ENCODE measurements at regions of chr6 and their contacts with region 1.

Region 1: GRCh38 chr6:16670183-16670582 is 91.1 kb downstream of the ATXN1 start:
- DNase-seq: peak; percentile 36 to 82 (median 62)
- ATAC-seq: peak; percentile 78 to 91 (median 90)
- H3K4me3 ChIP-seq: no peak overlapping the region
- H3K27ac ChIP-seq: peak overlapping the region in 9 of 12 donors; percentile 3 to 69 (median 22)
- H3K4me1 ChIP-seq: peaks cover 0 to 57% (median 41%) of the 10 kb centered on the region in 12 donors
- H3K27me3 ChIP-seq: no peaks in the 10 kb centered on the region
- CTCF ChIP-seq: no peak
- POLR2A ChIP-seq: no peak

Region 2: GRCh38 chr6:16540804-16541752 is 129.1 kb before region 1 on chr6:
- intact Hi-C with region 1: loop called in 1 of 10 experiments (anchors 10 kb)
- DNase-seq: peak in 3 of 5 donors; percentile 25 to 73 (median 62)
- ATAC-seq: peak; percentile 47 to 81 (median 64)
- H3K4me3 ChIP-seq: peak overlapping the region in 3 of 12 donors; percentile 1 to 27 (median 23)
- H3K27ac ChIP-seq: peak overlapping the region in 11 of 12 donors; percentile 6 to 88 (median 57)
- H3K4me1 ChIP-seq: peaks cover 4 to 48% (median 34%) of the 10 kb centered on the region in 12 donors
- H3K27me3 ChIP-seq: no peaks in the 10 kb centered on the region
- CTCF ChIP-seq: peak in 7 of 12 donors; percentile 6 to 47 (median 22)
- POLR2A ChIP-seq: no peak